ENCODE measurements at regions of chr12 and their contacts with region 1.

Region 1: GRCh38 chr12:87848248-87848868 is 180.8 kb downstream of the C12orf50 start:
- DNase-seq: peak; percentile 73
- H3K4me3 ChIP-seq: no peak overlapping the region
- H3K27ac ChIP-seq: no peak overlapping the region
- H3K4me1 ChIP-seq: no peaks in the 10 kb centered on the region
- H3K27me3 ChIP-seq: no peaks in the 10 kb centered on the region
- CTCF ChIP-seq: peak; percentile 54 to 71
- POLR2A ChIP-seq: no peak

Region 2: GRCh38 chr12:85951823-85952222 is 1896.5 kb before region 1 on chr12:
- CTCF ChIA-PET with region 1: no interaction called
- POLR2A ChIA-PET with region 1: no interaction called
- dilution Hi-C with region 1: no loop called
- intact Hi-C with region 1: loop called (anchors 2 kb)
- DNase-seq: peak; percentile 55
- H3K4me3 ChIP-seq: no peak overlapping the region
- H3K27ac ChIP-seq: no peak overlapping the region
- H3K4me1 ChIP-seq: peaks cover 4% of the 10 kb centered on the region
- H3K27me3 ChIP-seq: no peaks in the 10 kb centered on the region
- CTCF ChIP-seq: peak; percentile 17 to 25
- POLR2A ChIP-seq: no peak

Region 3: DNA sequence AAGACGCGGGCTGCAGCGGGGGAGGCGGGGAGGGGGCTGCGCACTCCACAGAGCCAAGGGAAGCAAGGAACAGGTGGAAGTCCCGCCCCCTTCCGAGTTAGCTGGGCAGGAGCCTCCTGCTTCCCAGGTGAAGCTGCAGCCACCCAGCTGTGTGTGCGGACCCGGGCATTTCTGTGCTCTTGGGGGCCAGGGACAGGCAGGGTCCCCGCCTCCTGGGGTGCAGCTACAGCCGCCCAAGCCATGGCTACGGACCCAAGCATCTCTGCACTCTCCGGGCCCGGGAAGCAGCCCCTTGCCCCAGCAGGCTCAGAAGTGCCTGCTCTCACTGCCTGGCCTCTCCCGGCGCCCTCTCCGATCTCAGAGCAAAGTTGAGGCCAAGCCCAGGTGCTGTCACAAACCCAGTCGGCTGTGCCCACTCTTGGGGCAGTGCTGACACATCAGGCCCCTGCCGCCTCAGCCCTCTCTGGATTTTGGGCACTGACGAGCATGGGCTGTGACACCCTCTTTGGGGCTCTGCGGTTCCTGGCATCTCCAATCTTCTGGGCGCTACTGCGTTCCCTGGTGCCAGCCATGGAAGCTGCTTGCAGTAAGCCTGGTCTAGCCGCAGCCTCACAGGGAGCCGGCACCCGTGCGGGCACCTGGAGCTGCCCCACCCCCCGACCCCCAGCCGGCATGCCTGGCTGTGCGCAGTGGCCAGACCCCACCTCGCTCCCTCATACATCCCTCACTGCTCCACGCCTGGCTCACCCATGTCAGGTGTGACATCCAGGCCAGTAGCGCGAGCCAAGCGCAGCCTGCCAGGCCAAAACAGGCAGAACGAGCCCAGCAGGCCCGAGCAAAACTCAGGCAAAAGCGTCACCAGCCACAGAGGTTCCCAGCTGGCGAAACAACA is 1583.7 kb before region 1 on chr12:
- CTCF ChIA-PET with region 1: no interaction called
- POLR2A ChIA-PET with region 1: no interaction called
- dilution Hi-C with region 1: no loop called
- intact Hi-C with region 1: loop called (anchors 5 kb)
- DNase-seq: no peak
- H3K4me3 ChIP-seq: peak overlapping the region in 1 of 3 experiments; percentile 13
- H3K27ac ChIP-seq: no peak overlapping the region
- H3K4me1 ChIP-seq: no peaks in the 10 kb centered on the region
- H3K27me3 ChIP-seq: no peaks in the 10 kb centered on the region
- CTCF ChIP-seq: no peak
- POLR2A ChIP-seq: no peak

Region 4: DNA sequence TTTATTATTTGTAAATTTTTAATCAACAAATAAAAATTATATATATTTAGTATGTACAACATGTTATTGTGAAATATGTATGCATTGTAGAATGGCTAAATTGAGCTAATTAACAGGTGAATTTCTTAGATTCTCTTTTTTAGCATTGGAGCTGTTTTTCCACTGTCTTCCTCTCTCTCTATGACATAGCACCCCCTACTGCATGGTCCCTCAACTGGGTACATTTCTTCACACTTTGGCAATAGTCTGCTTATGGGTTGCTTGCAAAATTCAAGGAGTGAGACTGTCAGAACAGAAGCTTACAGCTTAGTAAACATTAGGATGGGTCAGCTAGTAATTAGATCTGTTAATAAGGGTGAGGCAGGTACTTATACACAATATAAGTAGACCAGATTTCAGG is 933.6 kb before region 1 on chr12:
- CTCF ChIA-PET with region 1: interaction called, 14 read pairs
- POLR2A ChIA-PET with region 1: no interaction called
- dilution Hi-C with region 1: no loop called
- intact Hi-C with region 1: loop called (anchors 5 kb)
- DNase-seq: peak; percentile 69
- H3K4me3 ChIP-seq: no peak overlapping the region
- H3K27ac ChIP-seq: no peak overlapping the region
- H3K4me1 ChIP-seq: no peaks in the 10 kb centered on the region
- H3K27me3 ChIP-seq: no peaks in the 10 kb centered on the region
- CTCF ChIP-seq: peak; percentile 34 to 56
- POLR2A ChIP-seq: no peak

Region 5: DNA sequence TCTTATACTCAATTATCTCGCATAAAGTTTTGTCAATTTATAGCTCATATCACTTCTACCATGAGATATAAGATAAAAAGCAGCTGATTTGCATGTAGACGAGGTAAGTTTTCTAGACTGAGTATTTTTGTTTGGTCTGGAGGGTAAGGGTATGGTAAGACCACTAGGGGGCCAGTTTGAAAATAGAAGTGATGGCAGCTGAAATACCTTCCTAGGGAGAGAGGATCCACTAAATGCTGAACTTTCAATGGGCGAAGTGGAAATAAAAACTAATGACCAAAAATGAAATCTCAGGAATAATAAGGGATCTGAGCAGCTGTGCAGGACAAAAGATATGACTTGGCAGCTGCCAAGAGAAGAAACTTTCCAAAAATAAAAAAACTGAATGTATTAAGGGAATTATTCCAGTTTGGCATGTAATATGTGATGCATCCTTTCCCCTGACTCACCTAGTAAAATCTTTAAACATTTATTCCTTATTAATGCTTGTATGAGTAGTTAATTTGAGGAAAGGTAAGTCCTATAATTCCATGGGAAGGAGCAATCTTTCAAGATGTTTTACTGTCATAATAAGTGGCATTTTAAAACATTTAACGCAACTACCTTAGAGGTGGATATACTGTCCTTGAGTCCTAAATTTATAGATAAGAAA is 573.6 kb before region 1 on chr12:
- CTCF ChIA-PET with region 1: interaction called, 12 read pairs
- POLR2A ChIA-PET with region 1: no interaction called
- dilution Hi-C with region 1: no loop called
- intact Hi-C with region 1: loop called (anchors 1 kb)
- DNase-seq: peak; percentile 47
- H3K4me3 ChIP-seq: no peak overlapping the region
- H3K27ac ChIP-seq: no peak overlapping the region
- H3K4me1 ChIP-seq: no peaks in the 10 kb centered on the region
- H3K27me3 ChIP-seq: no peaks in the 10 kb centered on the region
- CTCF ChIP-seq: peak; percentile 52 to 57
- POLR2A ChIP-seq: no peak

Region 6: GRCh38 chr12:87323369-87323768 is 525.0 kb before region 1 on chr12:
- CTCF ChIA-PET with region 1: no interaction called
- POLR2A ChIA-PET with region 1: no interaction called
- dilution Hi-C with region 1: no loop called
- intact Hi-C with region 1: loop called (anchors 5 kb)
- DNase-seq: peak; percentile 91
- H3K4me3 ChIP-seq: no peak overlapping the region
- H3K27ac ChIP-seq: peak overlapping the region; percentile 66
- H3K4me1 ChIP-seq: peaks cover 28% of the 10 kb centered on the region
- H3K27me3 ChIP-seq: no peaks in the 10 kb centered on the region
- CTCF ChIP-seq: no peak
- POLR2A ChIP-seq: no peak

Region 7: GRCh38 chr12:87995581-87996178 is 147.3 kb after region 1 on chr12:
- CTCF ChIA-PET with region 1: no interaction called
- POLR2A ChIA-PET with region 1: no interaction called
- dilution Hi-C with region 1: no loop called
- intact Hi-C with region 1: loop called (anchors 5 kb)
- DNase-seq: peak; percentile 74
- H3K4me3 ChIP-seq: no peak overlapping the region
- H3K27ac ChIP-seq: no peak overlapping the region
- H3K4me1 ChIP-seq: no peaks in the 10 kb centered on the region
- H3K27me3 ChIP-seq: no peaks in the 10 kb centered on the region
- CTCF ChIP-seq: peak; percentile 65 to 66
- POLR2A ChIP-seq: no peak